ENCODE measurements at regions of chr15 and their contacts with region 1.

Region 1: GRCh38 chr15:65212097-65212496 is 824 bp upstream of the CILP start:
- DNase-seq: peak; percentile 69
- H3K4me3 Mint-ChIP-seq: no peak overlapping the region
- H3K27ac Mint-ChIP-seq: no peak overlapping the region
- H3K4me1 Mint-ChIP-seq: peaks cover 3% of the 10 kb centered on the region
- H3K27me3 Mint-ChIP-seq: no peaks in the 10 kb centered on the region

Region 2: GRCh38 chr15:64865998-64866520 is 346.0 kb before region 1 on chr15:
- CTCF ChIA-PET with region 1: no interaction called
- intact Hi-C with region 1: no loop called
- DNase-seq: no peak
- H3K4me3 Mint-ChIP-seq: no peak overlapping the region
- H3K27ac Mint-ChIP-seq: no peak overlapping the region
- H3K4me1 Mint-ChIP-seq: no peaks in the 10 kb centered on the region
- H3K27me3 Mint-ChIP-seq: no peaks in the 10 kb centered on the region

Region 3: GRCh38 chr15:65101411-65101890 is 110.6 kb before region 1 on chr15:
- CTCF ChIA-PET with region 1: no interaction called
- intact Hi-C with region 1: no loop called
- DNase-seq: peak; percentile 76
- H3K4me3 Mint-ChIP-seq: no peak overlapping the region
- H3K27ac Mint-ChIP-seq: no peak overlapping the region
- H3K4me1 Mint-ChIP-seq: no peaks in the 10 kb centered on the region
- H3K27me3 Mint-ChIP-seq: no peaks in the 10 kb centered on the region

Region 4: GRCh38 chr15:65231306-65231705 is 19.2 kb after region 1 on chr15:
- CTCF ChIA-PET with region 1: no interaction called
- intact Hi-C with region 1: no loop called
- DNase-seq: no peak
- H3K4me3 Mint-ChIP-seq: no peak overlapping the region
- H3K27ac Mint-ChIP-seq: no peak overlapping the region
- H3K4me1 Mint-ChIP-seq: peaks cover 3% of the 10 kb centered on the region
- H3K27me3 Mint-ChIP-seq: no peaks in the 10 kb centered on the region

Region 5: GRCh38 chr15:65249641-65250040 is 37.5 kb after region 1 on chr15:
- CTCF ChIA-PET with region 1: no interaction called
- intact Hi-C with region 1: loop called (anchors 5 kb)
- DNase-seq: peak; percentile 96
- H3K4me3 Mint-ChIP-seq: peak overlapping the region; percentile 4
- H3K27ac Mint-ChIP-seq: peak overlapping the region; percentile 78
- H3K4me1 Mint-ChIP-seq: peaks cover 24% of the 10 kb centered on the region
- H3K27me3 Mint-ChIP-seq: no peaks in the 10 kb centered on the region

Region 6: GRCh38 chr15:65512807-65513416 is 300.8 kb after region 1 on chr15:
- CTCF ChIA-PET with region 1: no interaction called
- intact Hi-C with region 1: no loop called
- DNase-seq: no peak
- H3K4me3 Mint-ChIP-seq: no peak overlapping the region
- H3K27ac Mint-ChIP-seq: no peak overlapping the region
- H3K4me1 Mint-ChIP-seq: peaks cover 39% of the 10 kb centered on the region
- H3K27me3 Mint-ChIP-seq: no peaks in the 10 kb centered on the region